ENCODE measurements at regions of chr14 and their contacts with region 1.

Region 1: GRCh38 chr14:89750281-89750755 is 204.2 kb downstream of the EFCAB11 start:
- DNase-seq: no peak
- H3K4me3 Mint-ChIP-seq: no peak overlapping the region
- H3K27ac Mint-ChIP-seq: peak overlapping the region; percentile 86
- H3K4me1 Mint-ChIP-seq: peaks cover 56% of the 10 kb centered on the region
- H3K27me3 Mint-ChIP-seq: no peaks in the 10 kb centered on the region

Region 2: GRCh38 chr14:89276424-89276975 is 473.8 kb before region 1 on chr14:
- intact Hi-C with region 1: loop called (anchors 2 kb)
- DNase-seq: peak; percentile 66
- H3K4me3 Mint-ChIP-seq: peak overlapping the region; percentile 77
- H3K27ac Mint-ChIP-seq: peak overlapping the region; percentile 99
- H3K4me1 Mint-ChIP-seq: peaks cover 83% of the 10 kb centered on the region
- H3K27me3 Mint-ChIP-seq: no peaks in the 10 kb centered on the region

Region 3: DNA sequence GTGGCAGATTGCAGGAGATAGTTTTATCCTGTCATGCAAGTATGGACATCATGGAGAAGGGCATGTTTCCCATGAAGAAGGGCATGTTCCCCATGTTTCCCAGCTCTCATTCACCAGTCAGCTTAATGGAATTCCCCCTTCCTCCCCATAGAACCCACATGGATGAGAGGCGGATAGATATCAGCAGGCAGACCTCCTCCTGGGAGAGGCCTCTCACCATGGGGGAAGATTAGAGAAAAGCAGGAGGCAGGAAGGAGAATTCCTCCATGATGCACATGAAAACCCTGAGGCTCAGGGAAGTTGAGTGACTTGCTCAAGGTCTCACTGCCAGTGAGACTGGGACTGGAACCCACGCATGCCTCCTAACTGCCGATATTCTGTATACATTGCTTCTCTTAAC is 240.4 kb before region 1 on chr14:
- intact Hi-C with region 1: loop called (anchors 5 kb)
- DNase-seq: no peak
- H3K4me3 Mint-ChIP-seq: peak overlapping the region; percentile 74
- H3K27ac Mint-ChIP-seq: peak overlapping the region; percentile 96
- H3K4me1 Mint-ChIP-seq: peaks cover 58% of the 10 kb centered on the region
- H3K27me3 Mint-ChIP-seq: no peaks in the 10 kb centered on the region

Region 4: GRCh38 chr14:89641495-89642175 is 108.7 kb before region 1 on chr14:
- intact Hi-C with region 1: loop called (anchors 1 kb)
- DNase-seq: peak; percentile 42
- H3K4me3 Mint-ChIP-seq: peak overlapping the region; percentile 50
- H3K27ac Mint-ChIP-seq: peak overlapping the region; percentile 93
- H3K4me1 Mint-ChIP-seq: peaks cover 65% of the 10 kb centered on the region
- H3K27me3 Mint-ChIP-seq: no peaks in the 10 kb centered on the region

Region 5: GRCh38 chr14:89681086-89682018 is 69.0 kb before region 1 on chr14:
- intact Hi-C with region 1: loop called (anchors 2 kb)
- DNase-seq: peak; percentile 26
- H3K4me3 Mint-ChIP-seq: peak overlapping the region; percentile 53
- H3K27ac Mint-ChIP-seq: peak overlapping the region; percentile 88
- H3K4me1 Mint-ChIP-seq: peaks cover 38% of the 10 kb centered on the region
- H3K27me3 Mint-ChIP-seq: no peaks in the 10 kb centered on the region

Region 6: GRCh38 chr14:89720741-89721315 is 29.5 kb before region 1 on chr14:
- intact Hi-C with region 1: loop called (anchors 1 kb)
- DNase-seq: peak; percentile 67
- H3K4me3 Mint-ChIP-seq: peak overlapping the region; percentile 54
- H3K27ac Mint-ChIP-seq: peak overlapping the region; percentile 96
- H3K4me1 Mint-ChIP-seq: peaks cover 64% of the 10 kb centered on the region
- H3K27me3 Mint-ChIP-seq: no peaks in the 10 kb centered on the region

Measured in activated T-helper 2 cell treated with anti-CD3 and anti-CD28 coated beads, Interferon-gamma antibody, Interleukin-2, Interleukin-4, amounts not matched to agents 10 μg/mL and 5 μg/mL and 100 μg/mL, durations not matched to agents 14 hours and 24 hours and 36 hours (primary cell).